Endothelial cell of umbilical vein (primary cell): ENCODE measurements at regions of chr10 and their contacts with region 1.

Region 1: GRCh38 chr10:3852147-3852904 is 67.3 kb upstream of the KLF6 start:
- DNase-seq: peak; percentile 98
- H3K4me3 ChIP-seq: no peak overlapping the region
- H3K27ac ChIP-seq: peak overlapping the region; percentile 93
- H3K4me1 ChIP-seq: peaks cover 23% of the 10 kb centered on the region
- H3K27me3 ChIP-seq: no peaks in the 10 kb centered on the region
- CTCF ChIP-seq: no peak
- POLR2A ChIP-seq: no peak

Region 2: GRCh38 chr10:3811291-3811870 is 40.9 kb before region 1 on chr10:
- CTCF ChIA-PET with region 1: no interaction called
- POLR2A ChIA-PET with region 1: interaction called, 4 read pairs
- dilution Hi-C with region 1: no loop called
- intact Hi-C with region 1: loop called (anchors 1 kb)
- DNase-seq: peak; percentile 70
- H3K4me3 ChIP-seq: no peak overlapping the region
- H3K27ac ChIP-seq: peak overlapping the region; percentile 100
- H3K4me1 ChIP-seq: peaks cover 55% of the 10 kb centered on the region
- H3K27me3 ChIP-seq: no peaks in the 10 kb centered on the region
- CTCF ChIP-seq: no peak
- POLR2A ChIP-seq: peak; percentile 28

Region 3: DNA sequence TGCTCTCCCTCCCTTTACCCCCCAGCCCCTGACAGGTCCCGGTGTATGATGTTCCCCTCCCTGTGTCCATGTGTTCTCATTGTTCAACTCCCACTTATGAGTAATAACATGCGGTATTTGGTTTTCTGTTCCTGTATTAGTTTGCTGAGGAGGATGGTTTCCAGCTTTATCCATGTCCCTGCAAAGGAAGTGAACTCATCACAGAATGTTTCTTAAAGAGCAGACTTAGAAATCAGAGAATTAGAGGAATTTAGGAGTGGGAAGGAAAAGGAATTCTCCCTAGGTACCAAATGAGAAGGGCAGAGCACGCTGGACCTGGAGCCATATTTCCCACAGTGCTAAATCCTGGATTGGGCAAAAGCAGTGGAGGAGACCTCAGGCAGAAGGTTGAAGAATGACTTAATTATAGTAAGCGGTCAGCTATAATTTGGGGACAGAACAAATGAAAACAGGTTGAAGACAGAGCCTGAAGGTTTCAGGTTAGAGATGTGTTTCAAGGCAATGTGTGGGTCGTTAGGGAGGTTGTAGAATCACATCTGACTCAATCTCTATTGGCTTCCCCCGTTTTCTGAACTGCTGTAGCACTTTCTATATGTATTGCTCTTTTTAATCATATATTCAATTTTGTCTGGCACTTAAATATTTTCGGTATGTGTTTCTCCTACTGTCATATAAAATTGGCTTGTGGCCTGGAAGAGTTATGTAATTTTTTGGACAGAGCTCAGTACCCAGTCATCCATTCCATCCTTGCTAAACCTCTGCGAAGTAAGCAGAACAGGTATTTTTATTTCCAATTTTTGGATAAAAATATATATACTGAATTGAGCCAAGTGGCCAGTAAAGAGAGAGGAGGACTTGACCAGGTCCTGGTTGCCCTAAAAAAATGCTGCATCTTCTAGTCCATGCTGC is 143.2 kb after region 1 on chr10:
- CTCF ChIA-PET with region 1: no interaction called
- POLR2A ChIA-PET with region 1: no interaction called
- dilution Hi-C with region 1: no loop called
- intact Hi-C with region 1: no loop called
- DNase-seq: peak; percentile 36
- H3K4me3 ChIP-seq: no peak overlapping the region
- H3K27ac ChIP-seq: peak overlapping the region; percentile 61
- H3K4me1 ChIP-seq: peaks cover 10% of the 10 kb centered on the region
- H3K27me3 ChIP-seq: no peaks in the 10 kb centered on the region
- CTCF ChIP-seq: no peak
- POLR2A ChIP-seq: no peak

Region 4: DNA sequence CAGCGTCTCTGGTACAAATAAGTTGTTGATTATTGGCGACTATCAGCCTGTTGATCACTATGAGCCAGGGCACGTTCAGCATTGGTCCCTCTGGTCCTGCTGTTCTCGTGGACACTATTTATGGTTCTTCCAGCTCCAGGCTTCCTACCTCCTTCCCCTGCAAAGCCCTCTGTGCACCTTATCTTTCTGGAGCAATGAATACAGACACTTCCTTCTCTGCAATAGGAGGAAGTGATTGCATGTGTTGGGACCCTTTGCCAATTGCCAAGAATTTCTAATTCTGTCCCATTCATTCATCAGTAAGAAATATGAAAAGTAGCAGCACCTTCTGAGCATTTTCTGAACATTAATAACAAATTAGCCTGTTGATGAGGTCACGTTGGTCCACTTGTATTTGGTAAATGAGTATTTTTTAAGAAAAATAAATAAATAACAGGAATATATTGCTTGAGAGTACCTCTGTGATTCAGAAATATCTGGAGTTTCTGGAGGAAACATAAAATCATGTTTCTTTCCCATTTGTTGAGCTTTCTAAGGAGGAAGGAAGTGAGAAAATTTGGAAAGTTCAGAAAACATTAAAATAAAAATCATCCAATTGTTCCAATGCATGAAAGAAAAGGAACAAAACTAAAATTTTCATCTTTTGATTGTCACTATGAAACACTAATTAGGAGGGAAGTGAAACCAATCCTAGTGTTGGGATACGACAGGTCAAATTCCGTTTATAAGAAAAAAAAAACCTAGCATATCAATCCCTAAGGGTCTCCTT is 191.8 kb after region 1 on chr10:
- CTCF ChIA-PET with region 1: no interaction called
- POLR2A ChIA-PET with region 1: no interaction called
- dilution Hi-C with region 1: no loop called
- intact Hi-C with region 1: loop called (anchors 5 kb)
- DNase-seq: peak; percentile 97
- H3K4me3 ChIP-seq: no peak overlapping the region
- H3K27ac ChIP-seq: peak overlapping the region; percentile 66
- H3K4me1 ChIP-seq: peaks cover 21% of the 10 kb centered on the region
- H3K27me3 ChIP-seq: no peaks in the 10 kb centered on the region
- CTCF ChIP-seq: no peak
- POLR2A ChIP-seq: peak; percentile 67

Region 5: DNA sequence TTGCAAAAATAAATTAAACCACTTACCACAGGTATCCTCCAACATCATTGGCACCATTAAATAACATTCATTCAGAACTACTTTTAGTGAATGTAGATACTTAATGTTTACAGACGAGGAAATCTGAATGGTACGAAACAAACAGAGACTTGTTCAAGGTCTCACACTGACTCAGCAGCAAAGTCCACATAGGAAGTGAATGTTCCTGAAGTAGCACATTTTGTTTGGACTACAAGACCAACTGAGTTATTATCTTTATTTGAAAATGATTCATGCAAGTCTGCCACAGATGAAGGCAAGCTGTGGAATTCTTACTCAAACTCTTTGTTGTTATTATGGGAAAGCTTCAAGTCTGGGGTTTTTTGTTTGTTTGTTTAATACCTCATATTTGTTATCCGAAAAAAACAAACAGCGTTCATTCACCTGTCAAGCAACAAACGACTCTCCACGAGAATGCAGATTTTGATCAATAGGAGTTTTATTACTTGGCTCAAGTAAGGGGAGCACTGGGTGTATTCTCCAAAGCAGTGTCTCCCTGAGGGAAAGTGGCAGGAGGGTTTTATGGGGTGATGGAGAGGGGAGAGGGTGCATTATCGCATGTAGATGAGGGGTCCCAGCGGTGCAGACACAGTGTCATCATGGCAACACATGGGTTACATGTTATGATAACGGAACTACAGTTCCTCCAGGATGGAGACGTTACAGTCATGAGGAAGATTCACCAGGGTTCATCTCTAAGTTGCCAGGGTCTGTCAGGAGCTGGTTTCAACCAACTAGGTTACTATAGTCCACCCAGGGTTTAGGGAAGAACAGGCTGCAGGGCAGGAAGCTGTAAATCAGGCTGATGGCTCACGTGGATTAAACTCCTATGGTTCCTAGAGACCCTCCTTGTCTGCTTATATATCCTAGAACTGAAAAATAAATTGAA is 826.0 kb after region 1 on chr10:
- CTCF ChIA-PET with region 1: no interaction called
- POLR2A ChIA-PET with region 1: no interaction called
- dilution Hi-C with region 1: no loop called
- intact Hi-C with region 1: loop called (anchors 1 kb)
- DNase-seq: peak; percentile 94
- H3K4me3 ChIP-seq: peak overlapping the region; percentile 32 to 99 (median 71)
- H3K27ac ChIP-seq: peak overlapping the region; percentile 84
- H3K4me1 ChIP-seq: peaks cover 31% of the 10 kb centered on the region
- H3K27me3 ChIP-seq: no peaks in the 10 kb centered on the region
- CTCF ChIP-seq: no peak
- POLR2A ChIP-seq: no peak

Region 6: GRCh38 chr10:4704034-4704545 is 851.8 kb after region 1 on chr10:
- CTCF ChIA-PET with region 1: no interaction called
- POLR2A ChIA-PET with region 1: interaction called, 10 read pairs
- dilution Hi-C with region 1: no loop called
- intact Hi-C with region 1: no loop called
- DNase-seq: peak; percentile 98
- H3K4me3 ChIP-seq: no peak overlapping the region
- H3K27ac ChIP-seq: peak overlapping the region; percentile 92
- H3K4me1 ChIP-seq: peaks cover 45% of the 10 kb centered on the region
- H3K27me3 ChIP-seq: no peaks in the 10 kb centered on the region
- CTCF ChIP-seq: no peak
- POLR2A ChIP-seq: peak; percentile 13